Thyroid gland (tissue), 4 donors: ENCODE measurements at regions of chr10 and their contacts with region 1.

Region 1: GRCh38 chr10:48981310-48981907 is 41.8 kb upstream of the LRRC18 start:
- DNase-seq: peak; percentile 75 to 80
- H3K4me3 ChIP-seq: no peak overlapping the region
- H3K27ac ChIP-seq: no peak overlapping the region
- H3K4me1 ChIP-seq: peaks cover 0 to 17% of the 10 kb centered on the region in 2 donors
- H3K27me3 ChIP-seq: no peaks in the 10 kb centered on the region
- CTCF ChIP-seq: peak; percentile 62 to 89 (median 82)
- POLR2A ChIP-seq: no peak

Region 2: GRCh38 chr10:48792687-48793096 is 188.7 kb before region 1 on chr10:
- intact Hi-C with region 1: no loop called
- DNase-seq: no peak
- H3K4me3 ChIP-seq: no peak overlapping the region
- H3K27ac ChIP-seq: no peak overlapping the region
- H3K4me1 ChIP-seq: peaks cover 0 to 7% of the 10 kb centered on the region in 2 donors
- H3K27me3 ChIP-seq: no peaks in the 10 kb centered on the region
- CTCF ChIP-seq: no peak
- POLR2A ChIP-seq: no peak

Region 3: GRCh38 chr10:49037187-49037586 is 55.8 kb after region 1 on chr10:
- intact Hi-C with region 1: no loop called
- DNase-seq: no peak
- H3K4me3 ChIP-seq: no peak overlapping the region
- H3K27ac ChIP-seq: no peak overlapping the region
- H3K4me1 ChIP-seq: no peaks in the 10 kb centered on the region
- H3K27me3 ChIP-seq: no peaks in the 10 kb centered on the region
- CTCF ChIP-seq: no peak
- POLR2A ChIP-seq: no peak

Region 4: DNA sequence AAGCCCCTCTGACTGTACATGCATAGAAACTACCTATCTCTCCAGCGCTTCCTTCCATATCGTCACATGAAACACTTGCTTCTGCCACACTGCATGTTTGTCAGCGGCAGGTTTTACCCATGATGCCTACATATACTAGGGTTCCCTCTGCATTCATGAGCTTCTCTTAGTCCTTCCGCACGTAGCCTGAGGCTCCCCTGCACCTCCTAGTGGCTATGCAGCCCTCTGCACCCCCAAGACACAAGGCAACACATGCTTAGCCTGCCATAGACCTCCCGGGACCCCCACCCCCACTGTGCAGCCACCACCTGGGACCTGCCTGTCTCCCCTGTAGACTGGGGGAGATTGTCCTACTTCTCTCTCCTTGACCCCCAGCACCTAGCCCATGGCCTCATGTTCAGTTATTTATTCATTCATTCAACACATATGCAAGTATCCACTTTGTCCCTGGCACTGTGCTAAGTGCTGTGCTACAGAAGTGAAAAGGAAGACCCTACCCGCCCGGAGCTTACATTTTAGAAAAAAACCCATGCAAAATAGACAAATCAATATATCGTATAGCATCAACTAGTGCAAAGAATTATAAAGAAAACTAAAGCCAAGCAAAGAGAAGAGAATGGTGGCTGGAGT is 183.3 kb after region 1 on chr10:
- intact Hi-C with region 1: loop called (anchors 2 kb)
- DNase-seq: peak; percentile 54 to 59
- H3K4me3 ChIP-seq: no peak overlapping the region
- H3K27ac ChIP-seq: no peak overlapping the region
- H3K4me1 ChIP-seq: no peaks in the 10 kb centered on the region
- H3K27me3 ChIP-seq: no peaks in the 10 kb centered on the region
- CTCF ChIP-seq: peak in 5 of 6 experiments; percentile 55 to 86 (median 73)
- POLR2A ChIP-seq: no peak

Region 5: GRCh38 chr10:49518982-49519578 is 537.7 kb after region 1 on chr10:
- intact Hi-C with region 1: loop called (anchors 10 kb)
- DNase-seq: peak; percentile 5 to 6
- H3K4me3 ChIP-seq: no peak overlapping the region
- H3K27ac ChIP-seq: no peak overlapping the region
- H3K4me1 ChIP-seq: peaks cover 7 to 14% of the 10 kb centered on the region in 2 donors
- H3K27me3 ChIP-seq: no peaks in the 10 kb centered on the region
- CTCF ChIP-seq: peak in 5 of 6 experiments; percentile 24 to 59 (median 50)
- POLR2A ChIP-seq: no peak